Activated naive CD4-positive, alpha-beta T cell treated with anti-CD3 and anti-CD28 coated beads for 36 hours (primary cell): ENCODE measurements at regions of chr19 and their contacts with region 1.

Region 1: GRCh38 chr19:18203863-18204393 is at the start of gene RAB3A:
- DNase-seq: peak; percentile 100
- H3K4me3 Mint-ChIP-seq: peak within 1 kb of the TSS; percentile 94
- H3K27ac Mint-ChIP-seq: peak within 1 kb of the TSS; percentile 68
- H3K4me1 Mint-ChIP-seq: peaks cover 22% of the 10 kb centered on the region
- H3K27me3 Mint-ChIP-seq: peaks cover 5% of the 10 kb centered on the region
- total RNA-seq, gene RAB3A: 3.8 to 6.0 TPM

Region 2: GRCh38 chr19:17605761-17606745 is 597.9 kb before region 1 on chr19:
- CTCF ChIA-PET with region 1: no interaction called
- intact Hi-C with region 1: no loop called
- DNase-seq: peak; percentile 79
- H3K4me3 Mint-ChIP-seq: peak overlapping the region; percentile 69
- H3K27ac Mint-ChIP-seq: peak overlapping the region; percentile 56
- H3K4me1 Mint-ChIP-seq: peaks cover 4% of the 10 kb centered on the region
- H3K27me3 Mint-ChIP-seq: peaks cover 25% of the 10 kb centered on the region

Region 3: GRCh38 chr19:18091217-18091608 is 112.7 kb before region 1 on chr19:
- CTCF ChIA-PET with region 1: no interaction called
- intact Hi-C with region 1: loop called (anchors 1 kb)
- DNase-seq: peak; percentile 94
- H3K4me3 Mint-ChIP-seq: peak overlapping the region; percentile 61
- H3K27ac Mint-ChIP-seq: peak overlapping the region; percentile 97
- H3K4me1 Mint-ChIP-seq: peaks cover 59% of the 10 kb centered on the region
- H3K27me3 Mint-ChIP-seq: no peaks in the 10 kb centered on the region

Region 4: DNA sequence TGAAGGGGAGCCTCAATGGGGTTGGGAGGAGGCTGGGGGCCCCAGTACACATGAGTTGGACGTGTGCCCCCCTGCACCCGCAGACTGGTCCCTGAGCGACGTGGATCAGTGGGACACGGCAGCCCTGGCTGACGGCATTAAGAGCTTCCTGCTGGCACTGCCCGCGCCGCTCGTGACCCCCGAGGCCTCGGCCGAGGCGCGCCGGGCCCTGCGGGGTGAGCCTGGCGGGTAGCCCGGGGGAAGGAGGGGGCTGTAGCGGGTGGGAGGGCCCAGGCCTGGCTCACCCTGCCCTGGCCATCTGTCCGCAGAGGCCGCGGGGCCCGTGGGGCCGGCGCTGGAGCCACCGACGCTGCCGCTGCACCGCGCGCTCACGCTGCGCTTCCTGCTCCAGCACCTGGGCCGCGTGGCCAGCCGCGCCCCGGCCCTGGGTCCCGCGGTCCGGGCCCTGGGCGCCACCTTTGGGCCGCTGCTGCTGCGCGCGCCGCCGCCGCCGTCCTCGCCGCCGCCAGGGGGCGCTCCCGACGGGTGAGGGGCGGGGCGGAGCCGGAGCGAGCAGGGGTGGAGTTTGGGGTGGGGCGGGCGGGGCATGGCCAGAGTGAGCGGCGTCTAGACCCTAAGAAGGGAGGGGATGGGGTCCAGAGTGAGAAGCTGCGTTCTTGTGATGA is 42.8 kb before region 1 on chr19:
- CTCF ChIA-PET with region 1: interaction called, 4 read pairs
- intact Hi-C with region 1: loop called (anchors 2 kb)
- DNase-seq: peak; percentile 77
- H3K4me3 Mint-ChIP-seq: peak overlapping the region; percentile 76
- H3K27ac Mint-ChIP-seq: no peak overlapping the region
- H3K4me1 Mint-ChIP-seq: peaks cover 10% of the 10 kb centered on the region
- H3K27me3 Mint-ChIP-seq: no peaks in the 10 kb centered on the region

Region 5: DNA sequence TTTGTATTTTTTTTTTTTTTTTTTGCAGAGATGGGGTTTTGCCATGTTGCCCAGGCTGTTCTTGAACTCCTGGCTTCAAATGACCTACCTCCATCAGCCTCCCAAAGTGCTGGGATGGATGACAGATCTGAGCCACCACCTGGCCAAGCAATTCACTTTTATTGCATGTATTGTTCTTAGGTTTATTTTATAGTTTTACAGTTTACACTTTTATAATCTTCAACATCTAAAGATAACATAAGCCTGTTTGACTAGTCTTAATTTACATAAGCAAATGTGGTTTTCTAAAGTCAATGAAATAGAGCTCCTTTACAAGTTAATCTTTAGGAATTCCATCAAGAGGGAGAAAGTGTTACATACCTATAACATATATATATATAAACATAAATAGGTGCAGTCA is 20.4 kb before region 1 on chr19:
- CTCF ChIA-PET with region 1: no interaction called
- intact Hi-C with region 1: no loop called
- DNase-seq: no peak
- H3K4me3 Mint-ChIP-seq: no peak overlapping the region
- H3K27ac Mint-ChIP-seq: no peak overlapping the region
- H3K4me1 Mint-ChIP-seq: no peaks in the 10 kb centered on the region
- H3K27me3 Mint-ChIP-seq: no peaks in the 10 kb centered on the region

Region 6: GRCh38 chr19:18251587-18252369 is 47.9 kb after region 1 on chr19:
- CTCF ChIA-PET with region 1: interaction called, 117 read pairs
- intact Hi-C with region 1: loop called (anchors 1 kb)
- DNase-seq: peak; percentile 90
- H3K4me3 Mint-ChIP-seq: no peak overlapping the region
- H3K27ac Mint-ChIP-seq: no peak overlapping the region
- H3K4me1 Mint-ChIP-seq: peaks cover 2% of the 10 kb centered on the region
- H3K27me3 Mint-ChIP-seq: peaks cover 23% of the 10 kb centered on the region

Region 7: GRCh38 chr19:18328340-18329034 is 124.6 kb after region 1 on chr19:
- CTCF ChIA-PET with region 1: interaction called, 7 read pairs
- intact Hi-C with region 1: loop called (anchors 1 kb)
- DNase-seq: peak; percentile 96
- H3K4me3 Mint-ChIP-seq: peak overlapping the region; percentile 68
- H3K27ac Mint-ChIP-seq: no peak overlapping the region
- H3K4me1 Mint-ChIP-seq: peaks cover 21% of the 10 kb centered on the region
- H3K27me3 Mint-ChIP-seq: no peaks in the 10 kb centered on the region